CD8-positive, alpha-beta memory T cell (primary cell): ENCODE measurements at regions of chr13 and their contacts with region 1.

Region 1: DNA sequence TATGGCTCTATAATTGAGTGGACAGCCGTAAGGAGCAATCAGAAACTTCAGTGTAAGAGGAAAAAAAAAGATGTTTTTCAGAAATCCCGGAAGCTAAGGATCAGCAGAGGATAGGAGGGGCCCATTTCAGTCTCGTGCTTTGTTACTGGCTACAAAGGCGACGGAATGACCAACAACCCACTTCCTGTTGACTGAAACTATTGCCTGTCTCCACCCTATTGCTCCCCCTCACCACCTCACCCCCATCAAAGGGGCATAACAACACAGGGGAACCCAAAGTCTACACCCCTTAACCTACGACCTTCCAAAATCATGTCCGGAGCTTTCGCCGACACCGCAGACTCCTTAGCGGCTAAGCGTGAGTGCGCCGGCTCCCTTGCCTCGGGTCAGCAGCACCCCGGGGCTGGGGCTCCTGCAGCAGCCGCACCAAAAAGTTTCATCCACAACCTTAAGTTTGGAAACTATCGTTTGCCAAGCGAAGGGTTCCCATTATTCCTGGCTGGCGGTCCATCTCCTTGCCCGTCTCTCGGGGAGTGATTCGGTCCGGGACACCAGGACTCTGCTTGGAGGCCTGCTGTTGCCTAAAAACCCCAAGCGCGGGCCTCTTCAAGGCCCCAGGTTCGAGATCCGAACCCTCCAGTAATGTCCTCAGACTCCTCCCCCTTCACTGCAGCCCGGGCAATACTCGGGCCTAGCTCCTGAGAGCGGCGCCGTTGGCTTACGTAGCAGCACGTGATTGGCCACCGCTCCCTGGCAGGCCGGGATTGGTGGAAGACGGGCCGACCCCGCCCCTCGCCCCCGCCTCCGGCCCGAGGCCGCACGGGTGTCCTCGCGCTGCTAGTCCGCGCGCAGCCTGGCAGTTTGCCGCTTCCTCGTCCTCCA is at the start of gene TPP2:
- DNase-seq: peak; percentile 96 to 99 (median 98)
- H3K4me3 ChIP-seq: peak within 1 kb of the TSS; percentile 98
- H3K4me3 Mint-ChIP-seq: peak within 1 kb of the TSS; percentile 97 to 100 (median 98)
- H3K27ac ChIP-seq: peak within 1 kb of the TSS; percentile 100
- H3K27ac Mint-ChIP-seq: peak within 1 kb of the TSS; percentile 99 to 100 (median 100)
- H3K4me1 ChIP-seq: peaks cover 48% of the 10 kb centered on the region
- H3K4me1 Mint-ChIP-seq: peaks cover 66 to 74% (median 73%) of the 10 kb centered on the region in 3 donors
- H3K27me3 ChIP-seq: no peaks in the 10 kb centered on the region
- H3K27me3 Mint-ChIP-seq: peaks cover 0 to 1% of the 10 kb centered on the region in 2 donors
- total RNA-seq, gene TPP2: 74.0 to 77.7 TPM

Region 2: DNA sequence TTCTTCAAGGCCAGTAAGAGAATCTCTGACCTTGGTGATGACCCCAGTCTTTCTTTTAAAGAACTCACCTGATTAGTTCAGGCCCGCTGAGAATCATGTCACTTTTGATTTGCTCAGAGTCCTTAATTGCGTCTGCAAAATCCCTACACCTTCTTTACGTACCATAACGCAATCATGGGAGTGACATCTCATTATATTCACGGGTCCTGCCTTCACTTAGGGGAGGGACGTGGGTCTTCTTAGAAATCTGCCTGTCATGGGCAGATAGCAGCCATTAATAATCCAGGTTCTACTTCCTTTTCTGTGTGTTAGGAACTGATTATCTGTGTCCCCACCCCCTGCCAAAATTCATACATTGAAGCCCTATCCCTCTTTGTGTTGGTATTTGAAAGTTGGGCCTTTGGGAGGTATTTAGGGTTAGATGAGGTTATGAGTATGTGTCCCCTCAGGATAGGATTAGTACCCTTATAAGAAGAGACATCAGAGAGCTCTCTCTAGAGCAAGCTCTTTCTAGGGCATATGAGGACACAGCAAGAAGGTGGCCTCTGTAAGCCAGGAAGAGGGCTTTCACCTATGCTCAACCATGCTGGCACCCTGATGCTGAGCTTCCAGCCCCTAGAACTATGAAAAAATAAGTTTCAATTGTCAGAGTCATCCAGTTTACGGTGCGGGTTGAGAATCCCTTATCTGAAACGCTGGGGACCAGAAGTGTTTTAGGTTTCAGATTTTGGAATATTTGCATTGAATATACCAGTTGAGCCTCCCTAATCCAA is 10.3 kb after region 1 on chr13:
- CTCF ChIA-PET with region 1: interaction called, 20 read pairs
- POLR2A ChIA-PET with region 1: interaction called, 24 read pairs
- DNase-seq: no peak
- H3K4me3 ChIP-seq: no peak overlapping the region
- H3K4me3 Mint-ChIP-seq: no peak overlapping the region
- H3K27ac ChIP-seq: no peak overlapping the region
- H3K27ac Mint-ChIP-seq: peak overlapping the region in 2 of 8 donors; percentile 23 to 43
- H3K4me1 ChIP-seq: peaks cover 35% of the 10 kb centered on the region
- H3K4me1 Mint-ChIP-seq: peaks cover 69 to 86% (median 82%) of the 10 kb centered on the region in 3 donors
- H3K27me3 ChIP-seq: no peaks in the 10 kb centered on the region
- H3K27me3 Mint-ChIP-seq: peaks cover 0 to 4% of the 10 kb centered on the region in 2 donors

Region 3: DNA sequence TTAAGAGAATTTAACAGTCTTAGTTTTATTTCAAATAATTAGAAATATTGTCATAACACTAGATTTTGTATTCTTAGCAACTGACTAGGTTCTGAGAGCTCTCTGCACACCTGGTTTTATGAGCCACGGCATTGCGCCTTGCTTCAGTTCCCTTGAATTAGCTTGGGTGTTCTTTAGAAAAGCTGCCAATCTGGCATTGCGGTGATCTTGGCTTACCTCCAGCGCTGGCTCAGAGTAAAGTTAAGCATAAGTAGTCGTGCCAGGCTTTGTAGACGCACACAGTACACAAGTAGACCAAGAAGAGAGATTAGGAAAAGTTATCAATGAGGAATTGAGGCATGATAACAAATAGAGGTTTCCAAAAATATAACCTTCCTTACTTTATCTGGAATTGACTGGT is 46.1 kb after region 1 on chr13:
- CTCF ChIA-PET with region 1: interaction called, 10 read pairs
- POLR2A ChIA-PET with region 1: interaction called, 3 read pairs
- DNase-seq: no peak
- H3K4me3 ChIP-seq: no peak overlapping the region
- H3K4me3 Mint-ChIP-seq: no peak overlapping the region
- H3K27ac ChIP-seq: no peak overlapping the region
- H3K27ac Mint-ChIP-seq: peak overlapping the region in 1 of 8 donors; percentile 43
- H3K4me1 ChIP-seq: no peaks in the 10 kb centered on the region
- H3K4me1 Mint-ChIP-seq: peaks cover 1 to 4% (median 4%) of the 10 kb centered on the region in 3 donors
- H3K27me3 ChIP-seq: no peaks in the 10 kb centered on the region
- H3K27me3 Mint-ChIP-seq: no peaks in the 10 kb centered on the region

Region 4: GRCh38 chr13:102800145-102801041 is 204.0 kb after region 1 on chr13:
- CTCF ChIA-PET with region 1: interaction called, 27 read pairs
- POLR2A ChIA-PET with region 1: interaction called, 12 read pairs
- DNase-seq: peak; percentile 73 to 88 (median 80)
- H3K4me3 ChIP-seq: peak overlapping the region; percentile 67
- H3K4me3 Mint-ChIP-seq: peak overlapping the region; percentile 89 to 98 (median 96)
- H3K27ac ChIP-seq: peak overlapping the region; percentile 61
- H3K27ac Mint-ChIP-seq: peak overlapping the region; percentile 59 to 95 (median 78)
- H3K4me1 ChIP-seq: peaks cover 6% of the 10 kb centered on the region
- H3K4me1 Mint-ChIP-seq: peaks cover 28 to 49% (median 45%) of the 10 kb centered on the region in 3 donors
- H3K27me3 ChIP-seq: no peaks in the 10 kb centered on the region
- H3K27me3 Mint-ChIP-seq: peaks cover 0 to 4% of the 10 kb centered on the region in 2 donors

Region 5: DNA sequence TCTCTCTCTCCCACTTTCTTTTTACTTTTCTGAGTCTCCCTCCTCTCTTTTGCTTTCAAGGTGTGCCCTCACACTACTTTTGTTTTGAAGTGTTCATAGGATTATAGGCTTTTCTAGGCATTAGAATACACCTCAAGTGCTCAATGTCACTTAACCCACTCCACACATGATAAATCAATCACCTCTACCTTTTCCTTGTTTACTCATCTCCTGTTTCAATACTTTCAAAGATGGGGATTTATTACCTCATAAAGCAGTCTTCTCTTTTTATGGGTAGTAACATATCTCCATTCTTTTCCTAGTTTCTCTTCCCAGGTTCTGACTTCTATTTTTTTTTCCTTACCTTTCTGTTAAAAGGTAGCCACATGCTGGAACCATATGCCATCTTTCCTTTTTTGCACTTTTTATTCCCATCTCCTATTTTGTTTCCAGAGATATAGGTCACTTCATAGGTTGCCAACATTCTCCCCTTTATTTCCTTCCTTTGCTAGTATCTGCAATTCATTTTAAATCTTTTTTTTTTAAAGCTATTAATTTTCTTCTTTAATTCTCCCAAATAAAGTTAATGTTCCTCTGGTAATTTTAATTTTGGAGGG is 607.4 kb after region 1 on chr13:
- CTCF ChIA-PET with region 1: no interaction called
- POLR2A ChIA-PET with region 1: no interaction called
- DNase-seq: no peak
- H3K4me3 ChIP-seq: no peak overlapping the region
- H3K4me3 Mint-ChIP-seq: no peak overlapping the region
- H3K27ac ChIP-seq: no peak overlapping the region
- H3K27ac Mint-ChIP-seq: no peak overlapping the region
- H3K4me1 ChIP-seq: no peaks in the 10 kb centered on the region
- H3K4me1 Mint-ChIP-seq: no peaks in the 10 kb centered on the region
- H3K27me3 ChIP-seq: no peaks in the 10 kb centered on the region
- H3K27me3 Mint-ChIP-seq: no peaks in the 10 kb centered on the region